IMR-90 (cell line): ENCODE measurements at regions of chr7 and their contacts with region 1.

Region 1: DNA sequence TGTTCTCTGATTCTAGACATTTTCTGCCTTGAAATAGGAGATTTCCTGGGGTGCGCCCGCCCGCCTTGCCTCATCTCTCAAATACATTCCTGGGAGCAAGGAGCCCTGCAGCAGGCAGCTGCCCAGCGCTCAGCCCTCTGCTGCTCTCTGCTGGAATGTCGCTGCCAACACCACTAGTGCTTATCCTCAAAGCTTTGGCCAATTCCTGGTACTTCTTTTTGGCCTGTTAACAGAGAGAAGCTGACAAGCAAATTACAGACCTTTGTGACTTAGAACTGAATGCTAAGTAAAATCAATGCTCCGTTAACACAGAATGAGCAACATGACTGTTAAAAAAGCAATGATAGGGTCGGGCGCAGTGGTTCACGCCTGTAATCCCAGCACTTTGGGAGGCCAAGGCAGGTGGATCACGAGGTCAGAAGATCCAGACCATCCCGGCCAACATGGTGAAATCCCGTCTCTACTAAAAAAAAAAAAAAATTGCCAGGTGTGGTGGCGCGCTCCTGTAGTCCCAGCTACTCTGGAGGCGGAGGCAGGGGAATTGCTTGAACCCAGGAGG is 41.9 kb upstream of the SYPL1 start:
- DNase-seq: peak; percentile 75
- ATAC-seq: peak; percentile 100
- H3K4me3 ChIP-seq: no peak overlapping the region
- H3K27ac ChIP-seq: no peak overlapping the region
- H3K4me1 ChIP-seq: no peaks in the 10 kb centered on the region
- H3K27me3 ChIP-seq: peaks cover 25% of the 10 kb centered on the region
- CTCF ChIP-seq: peak; percentile 98
- POLR2A ChIP-seq: peak; percentile 47; the same call in 1 of the 2 replicates
- RAD21 ChIP-seq: peak; percentile 99

Region 2: GRCh38 chr7:105652359-105652993 is 501.5 kb before region 1 on chr7:
- CTCF ChIA-PET with region 1: no interaction called
- POLR2A ChIA-PET with region 1: no interaction called
- dilution Hi-C with region 1: no loop called
- in situ Hi-C with region 1: no loop called
- intact Hi-C with region 1: loop called (anchors 2 kb)
- DNase-seq: peak; percentile 71
- ATAC-seq: peak; percentile 94
- H3K4me3 ChIP-seq: no peak overlapping the region
- H3K27ac ChIP-seq: no peak overlapping the region
- H3K4me1 ChIP-seq: peaks cover 10% of the 10 kb centered on the region; the same call in 1 of the 2 replicates
- H3K27me3 ChIP-seq: no peaks in the 10 kb centered on the region
- CTCF ChIP-seq: peak; percentile 85
- POLR2A ChIP-seq: no peak
- RAD21 ChIP-seq: peak; percentile 94

Region 3: DNA sequence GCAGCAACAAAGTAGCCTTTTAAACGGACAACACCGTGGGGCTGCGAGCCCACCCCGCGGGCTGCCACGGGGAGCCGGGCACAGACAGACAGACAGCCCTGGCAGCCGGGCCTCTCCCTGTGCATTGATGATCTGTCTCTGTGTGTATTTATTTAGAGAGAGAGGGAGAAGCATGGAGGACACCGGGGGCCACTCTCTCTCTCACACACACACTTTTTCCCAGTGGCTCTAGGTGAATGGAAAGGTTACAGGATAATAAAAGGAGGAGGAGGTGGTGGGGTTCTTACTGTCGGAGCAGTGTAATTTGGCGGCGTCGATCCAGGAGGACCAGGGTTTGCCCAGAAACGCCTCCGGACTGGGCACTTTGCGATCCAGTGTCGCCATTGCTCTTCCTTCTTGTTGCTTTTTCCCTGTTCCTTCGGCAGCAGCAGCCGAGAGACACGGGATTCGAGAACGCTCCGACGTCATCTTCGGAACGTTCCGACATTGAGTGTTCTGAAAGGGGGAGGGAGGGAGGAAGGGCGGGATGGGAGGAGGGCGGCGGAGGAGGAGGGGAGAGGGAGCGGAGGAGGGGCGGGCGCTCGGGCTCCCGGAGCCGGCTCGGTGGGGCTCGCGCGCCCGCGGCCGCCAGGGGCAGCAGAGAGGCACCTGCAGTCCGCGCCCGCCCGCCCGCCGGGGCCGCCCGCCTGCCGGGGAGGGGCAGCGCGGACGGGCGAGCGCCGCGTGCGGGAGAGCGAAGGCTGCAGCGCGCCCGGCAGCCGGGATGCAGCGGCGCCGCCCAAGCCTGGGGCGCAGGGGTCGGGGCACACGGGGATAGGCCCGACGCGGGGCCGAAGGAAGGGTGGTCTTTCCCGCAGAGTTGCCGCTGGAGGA is 277.6 kb before region 1 on chr7 and contains the start of gene ATXN7L1:
- CTCF ChIA-PET with region 1: no interaction called
- POLR2A ChIA-PET with region 1: no interaction called
- dilution Hi-C with region 1: no loop called
- in situ Hi-C with region 1: no loop called
- intact Hi-C with region 1: loop called (anchors 10 kb)
- DNase-seq: peak; percentile 98
- ATAC-seq: peak; percentile 97
- H3K4me3 ChIP-seq: peak within 1 kb of the TSS; percentile 82
- H3K27ac ChIP-seq: peak within 1 kb of the TSS; percentile 91
- H3K4me1 ChIP-seq: peaks cover 9% of the 10 kb centered on the region; the same call in 1 of the 2 replicates
- H3K27me3 ChIP-seq: no peaks in the 10 kb centered on the region
- CTCF ChIP-seq: peak; percentile 72
- POLR2A ChIP-seq: peak; percentile 87
- RAD21 ChIP-seq: peak; percentile 49
- total RNA-seq, gene ATXN7L1: 4.3 and 4.7 TPM in 2 replicates

Region 4: DNA sequence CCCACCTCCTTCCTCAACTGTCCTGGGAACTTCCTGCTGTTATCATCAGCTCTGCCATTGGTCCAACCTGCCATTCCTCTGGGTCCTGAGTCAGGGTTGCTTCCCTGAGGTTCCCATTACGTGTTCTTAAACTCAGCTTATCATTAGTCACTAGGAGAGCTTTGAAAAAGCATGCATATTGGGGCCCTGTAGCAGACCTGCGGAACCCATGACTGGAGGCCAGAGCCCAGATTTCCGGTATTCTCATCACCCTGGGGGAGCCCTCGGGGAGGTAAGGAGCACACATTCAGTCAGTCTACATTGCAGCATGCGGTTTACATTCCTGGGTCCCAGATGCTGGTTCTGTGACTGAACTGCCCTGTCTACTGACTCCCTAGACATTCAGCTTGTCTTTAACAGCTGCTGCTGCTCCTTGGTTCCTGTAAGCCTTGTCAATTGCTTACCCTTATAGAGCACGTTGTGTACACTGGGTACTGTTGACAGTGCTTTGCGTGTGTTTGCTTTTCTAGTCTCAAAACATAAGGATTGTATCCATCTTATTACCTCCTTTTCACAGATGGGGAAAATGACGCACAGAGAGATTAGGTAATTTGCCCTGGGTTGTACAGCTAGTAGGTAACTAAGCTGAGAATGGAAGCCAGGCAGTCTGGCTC is 178.1 kb before region 1 on chr7:
- CTCF ChIA-PET with region 1: no interaction called
- POLR2A ChIA-PET with region 1: no interaction called
- dilution Hi-C with region 1: no loop called
- in situ Hi-C with region 1: no loop called
- intact Hi-C with region 1: no loop called
- DNase-seq: peak; percentile 81
- ATAC-seq: peak; percentile 74
- H3K4me3 ChIP-seq: no peak overlapping the region
- H3K27ac ChIP-seq: no peak overlapping the region
- H3K4me1 ChIP-seq: peaks cover 3% of the 10 kb centered on the region; the same call in 1 of the 2 replicates
- H3K27me3 ChIP-seq: peaks cover 9% of the 10 kb centered on the region
- CTCF ChIP-seq: no peak
- POLR2A ChIP-seq: no peak
- RAD21 ChIP-seq: no peak

Region 5: GRCh38 chr7:106050011-106050745 is 103.8 kb before region 1 on chr7:
- CTCF ChIA-PET with region 1: interaction called, 18 read pairs
- POLR2A ChIA-PET with region 1: no interaction called
- dilution Hi-C with region 1: no loop called
- in situ Hi-C with region 1: loop called (anchors 5 kb)
- intact Hi-C with region 1: no loop called
- DNase-seq: peak; percentile 59
- ATAC-seq: peak; percentile 78
- H3K4me3 ChIP-seq: no peak overlapping the region
- H3K27ac ChIP-seq: no peak overlapping the region
- H3K4me1 ChIP-seq: peaks cover 7% of the 10 kb centered on the region
- H3K27me3 ChIP-seq: peaks cover 23% of the 10 kb centered on the region
- CTCF ChIP-seq: peak; percentile 26
- POLR2A ChIP-seq: no peak
- RAD21 ChIP-seq: peak; percentile 20; the same call in 1 of the 2 replicates

Region 6: DNA sequence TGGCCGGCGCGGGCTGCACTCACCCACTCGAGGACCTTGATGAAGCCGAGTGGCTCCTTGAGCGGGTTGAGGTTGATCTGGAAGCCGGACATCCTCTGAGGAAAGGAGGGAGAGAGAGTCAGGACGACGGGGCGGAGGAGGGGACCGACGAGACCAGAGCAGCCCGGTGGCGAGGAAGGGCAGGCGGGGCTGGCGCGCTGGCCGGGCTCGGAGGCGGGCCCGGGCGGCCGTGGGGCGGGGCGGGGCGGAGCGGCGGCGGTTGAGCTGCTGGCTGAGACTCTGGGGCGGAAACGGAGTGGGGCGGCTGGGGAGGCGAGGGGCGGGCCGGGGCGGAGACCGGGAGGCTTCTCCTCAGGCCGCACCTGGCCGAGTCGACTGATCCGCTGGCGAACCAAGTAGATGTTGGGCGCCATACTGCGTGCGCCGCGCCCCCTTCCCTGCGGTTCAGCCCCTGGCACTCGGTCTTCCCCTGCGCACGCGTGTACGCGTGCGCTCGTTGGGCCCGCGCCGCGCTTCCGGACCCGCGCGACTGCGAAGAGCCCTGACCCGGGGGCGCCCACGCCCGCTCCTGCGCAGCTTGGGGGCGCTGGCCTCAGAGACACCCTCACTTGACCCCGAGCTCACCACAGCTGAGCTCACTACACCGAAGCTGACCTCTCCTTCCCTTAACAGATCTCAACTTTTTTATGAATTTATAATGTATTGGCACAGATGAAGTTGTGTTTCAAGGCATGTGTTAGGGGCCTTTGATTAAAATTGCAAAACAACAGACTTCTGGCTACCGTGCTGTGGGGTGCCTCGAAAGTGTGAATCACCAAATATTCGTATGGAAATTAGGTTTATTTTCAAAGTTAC is 41.6 kb before region 1 on chr7 and contains the start of gene SYPL1:
- CTCF ChIA-PET with region 1: interaction called, 3 read pairs
- POLR2A ChIA-PET with region 1: no interaction called
- dilution Hi-C with region 1: no loop called
- in situ Hi-C with region 1: no loop called
- intact Hi-C with region 1: loop called (anchors 5 kb)
- DNase-seq: peak; percentile 88
- ATAC-seq: peak; percentile 94
- H3K4me3 ChIP-seq: peak within 1 kb of the TSS; percentile 93
- H3K27ac ChIP-seq: peak within 1 kb of the TSS; percentile 98
- H3K4me1 ChIP-seq: peaks cover 2% of the 10 kb centered on the region; the same call in 1 of the 2 replicates
- H3K27me3 ChIP-seq: no peaks in the 10 kb centered on the region
- CTCF ChIP-seq: no peak
- POLR2A ChIP-seq: no peak; the same call in none of the 2 replicates
- RAD21 ChIP-seq: no peak
- total RNA-seq, gene SYPL1: 19.0 and 35.6 TPM in 2 replicates